ENCODE measurements at regions of chr11 and their contacts with region 1.

Region 1: DNA sequence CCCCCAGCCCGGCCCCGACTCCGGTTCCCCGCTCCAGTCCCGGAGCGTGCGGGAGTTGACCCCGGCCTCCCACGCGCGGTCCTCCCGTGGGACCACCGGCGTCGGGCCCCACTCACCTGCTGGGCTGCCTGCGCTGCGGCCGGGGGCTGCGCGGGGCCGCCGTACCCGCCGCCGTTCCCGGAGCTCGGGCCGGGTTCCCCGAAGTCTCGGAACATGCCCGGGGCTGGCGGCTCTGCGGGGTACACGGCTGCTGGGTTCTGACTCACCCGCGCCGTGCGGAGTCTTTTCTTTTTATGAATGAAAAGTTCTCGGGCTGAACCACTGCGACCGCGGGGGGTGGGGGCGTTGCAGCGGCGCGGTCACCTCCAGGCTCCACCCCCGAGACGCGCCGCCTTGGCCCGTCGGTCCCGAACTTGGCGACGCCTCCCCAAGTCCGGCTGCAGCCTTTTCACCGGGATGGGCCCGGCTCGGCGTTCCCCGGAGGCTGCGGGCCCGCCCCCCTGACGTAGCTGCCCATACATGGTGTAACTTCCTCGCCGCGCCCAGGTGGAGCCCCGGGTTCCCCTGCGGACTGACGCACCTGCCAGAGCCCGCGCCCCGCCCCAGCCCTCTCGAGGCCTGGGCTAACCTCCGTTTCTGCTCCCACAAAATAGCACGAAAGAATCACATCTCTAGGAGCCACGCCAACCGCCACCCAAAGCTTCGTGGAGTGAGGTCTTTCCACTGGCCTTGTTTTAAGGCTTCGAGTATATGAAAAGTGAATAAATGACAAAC is at the start of gene FOSL1:
- DNase-seq: peak; percentile 68
- H3K4me3 ChIP-seq: peak within 1 kb of the TSS; percentile 65
- H3K27ac ChIP-seq: no peak within 1 kb of the TSS
- H3K4me1 ChIP-seq: peaks cover 20% of the 10 kb centered on the region
- CTCF ChIP-seq: no peak
- total RNA-seq, gene FOSL1: 0.88 TPM in 1 of 2 replicates, not detected in the other

Region 2: GRCh38 chr11:65919146-65920033 is 19.1 kb after region 1 on chr11 and contains the start of gene DRAP1:
- CTCF ChIA-PET with region 1: no interaction called
- POLR2A ChIA-PET with region 1: no interaction called
- intact Hi-C with region 1: loop called (anchors 2 kb)
- DNase-seq: peak; percentile 99
- H3K4me3 ChIP-seq: peak within 1 kb of the TSS; percentile 85
- H3K27ac ChIP-seq: peak within 1 kb of the TSS; percentile 54
- H3K4me1 ChIP-seq: peaks cover 22% of the 10 kb centered on the region
- CTCF ChIP-seq: no peak
- total RNA-seq, gene DRAP1: 93.2 and 110 TPM in 2 replicates